ENCODE measurements at regions of chr7 and their contacts with region 1.

Region 1: DNA sequence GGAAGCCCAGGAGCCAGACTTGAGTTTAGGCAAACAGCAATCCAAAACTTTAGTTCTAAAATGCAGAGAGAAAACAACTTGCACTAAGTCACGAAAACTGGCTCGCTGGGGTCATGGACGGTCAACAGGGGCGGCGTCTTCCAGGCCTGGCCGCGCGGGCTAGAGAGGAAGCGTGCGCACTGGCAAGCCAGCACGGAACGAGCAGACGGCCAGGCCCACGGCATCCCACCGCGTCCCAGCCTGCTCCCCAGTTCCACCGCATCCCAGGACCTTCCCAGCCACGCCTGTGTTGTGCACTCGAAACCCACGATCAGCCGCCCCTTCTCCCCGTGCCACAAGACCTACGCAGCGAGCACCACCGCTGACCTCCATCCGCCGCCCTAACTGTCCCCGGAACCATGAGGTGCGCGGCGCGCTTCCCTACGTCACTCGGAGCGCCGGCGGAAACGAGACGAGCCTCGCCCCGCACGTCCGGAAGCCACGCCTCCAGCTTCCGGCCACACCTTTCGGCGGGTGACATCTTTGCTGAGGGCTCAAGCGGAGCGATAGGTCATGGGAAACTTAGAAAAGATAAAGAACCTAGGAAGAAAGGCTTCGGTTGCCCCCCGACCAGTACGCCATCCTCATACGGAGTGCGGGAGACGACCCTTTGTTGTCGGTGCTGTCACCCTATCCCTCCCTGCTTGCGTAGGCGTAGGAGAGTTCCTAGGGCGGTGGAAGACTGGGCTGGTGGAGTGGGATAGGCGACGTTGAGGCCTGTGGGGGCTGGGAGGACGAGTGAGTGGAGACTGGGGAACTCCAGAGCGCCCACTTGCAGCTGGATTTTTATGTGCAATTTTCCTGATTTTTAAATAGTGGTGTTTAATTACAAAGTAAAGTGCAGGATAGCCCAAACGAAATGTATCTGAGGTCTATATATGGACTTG is at the start of gene TBRG4:
- DNase-seq: peak; percentile 97 to 98
- ATAC-seq: peak; percentile 99
- H3K4me3 ChIP-seq: peak within 1 kb of the TSS; percentile 90
- H3K27ac ChIP-seq: peak within 1 kb of the TSS; percentile 95
- H3K4me1 ChIP-seq: peaks cover 26% of the 10 kb centered on the region
- H3K27me3 ChIP-seq: no peaks in the 10 kb centered on the region
- CTCF ChIP-seq: peak; percentile 35
- total RNA-seq, gene TBRG4: 70.9 to 127 (median 84.1) TPM

Region 2: GRCh38 chr7:44986218-44987053 is 125.1 kb before region 1 on chr7:
- intact Hi-C with region 1: loop called (anchors 5 kb)
- DNase-seq: peak; percentile 95 to 98
- ATAC-seq: peak; percentile 97 to 99 (median 98)
- H3K4me3 ChIP-seq: peak overlapping the region; percentile 92
- H3K27ac ChIP-seq: peak overlapping the region; percentile 96
- H3K4me1 ChIP-seq: peaks cover 20% of the 10 kb centered on the region
- H3K27me3 ChIP-seq: no peaks in the 10 kb centered on the region
- CTCF ChIP-seq: no peak

Region 3: GRCh38 chr7:44999245-45000095 is 112.1 kb before region 1 on chr7:
- intact Hi-C with region 1: loop called (anchors 5 kb)
- DNase-seq: peak; percentile 100
- ATAC-seq: peak; percentile 94 to 96 (median 94)
- H3K4me3 ChIP-seq: peak overlapping the region; percentile 75
- H3K27ac ChIP-seq: peak overlapping the region; percentile 91
- H3K4me1 ChIP-seq: peaks cover 13% of the 10 kb centered on the region
- H3K27me3 ChIP-seq: no peaks in the 10 kb centered on the region
- CTCF ChIP-seq: no peak